ENCODE measurements at regions of chr4 and their contacts with region 1.

Region 1: GRCh38 chr4:177047070-177047850 is 254.5 kb upstream of the VEGFC start:
- DNase-seq: peak; percentile 50 to 69
- H3K4me3 ChIP-seq: no peak overlapping the region
- H3K4me3 Mint-ChIP-seq: no peak overlapping the region
- H3K27ac Mint-ChIP-seq: no peak overlapping the region
- H3K4me1 ChIP-seq: no peaks in the 10 kb centered on the region
- H3K4me1 Mint-ChIP-seq: peaks cover 7% of the 10 kb centered on the region
- H3K27me3 ChIP-seq: no peaks in the 10 kb centered on the region
- H3K27me3 Mint-ChIP-seq: peaks cover 7% of the 10 kb centered on the region
- CTCF ChIP-seq: peak; percentile 76 to 77

Region 2: GRCh38 chr4:176377780-176378179 is 669.5 kb before region 1 on chr4:
- CTCF ChIA-PET with region 1: interaction called, 13 read pairs
- POLR2A ChIA-PET with region 1: no interaction called
- intact Hi-C with region 1: loop called (anchors 1 kb)
- DNase-seq: no peak
- H3K4me3 ChIP-seq: no peak overlapping the region
- H3K4me3 Mint-ChIP-seq: no peak overlapping the region
- H3K27ac Mint-ChIP-seq: no peak overlapping the region
- H3K4me1 ChIP-seq: no peaks in the 10 kb centered on the region
- H3K4me1 Mint-ChIP-seq: no peaks in the 10 kb centered on the region
- H3K27me3 ChIP-seq: no peaks in the 10 kb centered on the region
- H3K27me3 Mint-ChIP-seq: peaks cover 6% of the 10 kb centered on the region
- CTCF ChIP-seq: peak in 1 of 2 experiments; percentile 34

Region 3: GRCh38 chr4:176563591-176563990 is 483.7 kb before region 1 on chr4:
- CTCF ChIA-PET with region 1: interaction called, 8 read pairs
- POLR2A ChIA-PET with region 1: no interaction called
- intact Hi-C with region 1: loop called (anchors 1 kb)
- DNase-seq: no peak
- H3K4me3 ChIP-seq: no peak overlapping the region
- H3K4me3 Mint-ChIP-seq: no peak overlapping the region
- H3K27ac Mint-ChIP-seq: no peak overlapping the region
- H3K4me1 ChIP-seq: no peaks in the 10 kb centered on the region
- H3K4me1 Mint-ChIP-seq: no peaks in the 10 kb centered on the region
- H3K27me3 ChIP-seq: no peaks in the 10 kb centered on the region
- H3K27me3 Mint-ChIP-seq: peaks cover 7% of the 10 kb centered on the region
- CTCF ChIP-seq: peak in 1 of 2 experiments; percentile 1

Region 4: GRCh38 chr4:176789955-176790354 is 257.3 kb before region 1 on chr4:
- CTCF ChIA-PET with region 1: interaction called, 3 read pairs
- POLR2A ChIA-PET with region 1: no interaction called
- intact Hi-C with region 1: loop called (anchors 1 kb)
- DNase-seq: peak in 1 of 2 experiments; percentile 2
- H3K4me3 ChIP-seq: no peak overlapping the region
- H3K4me3 Mint-ChIP-seq: no peak overlapping the region
- H3K27ac Mint-ChIP-seq: no peak overlapping the region
- H3K4me1 ChIP-seq: no peaks in the 10 kb centered on the region
- H3K4me1 Mint-ChIP-seq: no peaks in the 10 kb centered on the region
- H3K27me3 ChIP-seq: no peaks in the 10 kb centered on the region
- H3K27me3 Mint-ChIP-seq: peaks cover 2% of the 10 kb centered on the region
- CTCF ChIP-seq: peak; percentile 39 to 43

Region 5: GRCh38 chr4:176964116-176964691 is 83.1 kb before region 1 on chr4:
- CTCF ChIA-PET with region 1: interaction called, 13 read pairs
- POLR2A ChIA-PET with region 1: no interaction called
- intact Hi-C with region 1: loop called (anchors 2 kb)
- DNase-seq: peak in 1 of 2 experiments; percentile 21
- H3K4me3 ChIP-seq: no peak overlapping the region
- H3K4me3 Mint-ChIP-seq: no peak overlapping the region
- H3K27ac Mint-ChIP-seq: no peak overlapping the region
- H3K4me1 ChIP-seq: no peaks in the 10 kb centered on the region
- H3K4me1 Mint-ChIP-seq: no peaks in the 10 kb centered on the region
- H3K27me3 ChIP-seq: no peaks in the 10 kb centered on the region
- H3K27me3 Mint-ChIP-seq: peaks cover 5% of the 10 kb centered on the region
- CTCF ChIP-seq: peak in 1 of 2 experiments; percentile 21

Region 6: DNA sequence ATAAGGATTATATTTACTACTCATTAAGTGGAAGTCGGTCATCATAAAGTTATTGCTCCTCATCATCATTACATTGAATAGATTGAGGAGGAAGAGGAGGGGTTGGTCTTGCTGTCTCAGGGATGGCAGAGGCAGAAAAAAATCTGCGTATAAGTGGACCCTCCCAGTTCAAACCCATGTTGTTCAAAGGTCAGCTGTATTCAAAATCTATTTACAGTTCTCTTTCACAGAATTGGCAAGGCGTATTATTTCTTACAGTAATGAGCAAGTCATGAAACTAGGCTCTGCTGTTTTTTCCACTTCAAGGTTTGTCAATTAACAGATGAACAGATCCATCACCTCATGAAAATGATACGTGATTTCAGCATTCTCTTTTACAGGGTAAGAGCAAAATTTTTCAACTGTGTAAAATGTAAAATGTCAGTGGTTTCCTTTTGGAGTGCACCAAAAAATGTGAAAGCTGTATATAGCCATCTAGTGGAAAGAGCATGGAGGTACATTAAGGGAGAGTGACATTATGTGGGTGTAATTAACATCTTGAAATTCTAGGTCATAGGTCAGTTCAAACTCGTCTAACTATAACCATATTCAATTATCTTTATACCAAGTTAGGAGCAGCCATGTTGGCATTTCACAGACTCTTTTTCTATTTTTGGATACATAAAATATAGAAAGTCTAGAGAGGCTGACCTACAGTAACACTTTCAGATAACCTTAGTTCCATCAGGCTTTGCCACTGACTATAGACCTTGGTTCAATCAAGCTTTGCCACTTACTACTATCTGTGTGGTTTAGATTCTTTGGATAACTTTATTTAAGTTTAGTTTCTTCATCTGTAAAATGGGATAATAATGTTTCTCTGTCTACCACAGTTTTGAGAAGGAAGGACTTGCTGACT is 292.5 kb after region 1 on chr4:
- CTCF ChIA-PET with region 1: no interaction called
- POLR2A ChIA-PET with region 1: no interaction called
- intact Hi-C with region 1: loop called (anchors 1 kb)
- DNase-seq: no peak
- H3K4me3 ChIP-seq: no peak overlapping the region
- H3K4me3 Mint-ChIP-seq: no peak overlapping the region
- H3K27ac Mint-ChIP-seq: no peak overlapping the region
- H3K4me1 ChIP-seq: no peaks in the 10 kb centered on the region
- H3K4me1 Mint-ChIP-seq: no peaks in the 10 kb centered on the region
- H3K27me3 ChIP-seq: no peaks in the 10 kb centered on the region
- H3K27me3 Mint-ChIP-seq: no peaks in the 10 kb centered on the region
- CTCF ChIP-seq: peak; percentile 50 to 64

Measured in Caco-2 (cell line).